Naive thymus-derived CD4-positive, alpha-beta T cell (primary cell): ENCODE measurements at regions of chr22 and their contacts with region 1.

Region 1: GRCh38 chr22:40636380-40637182 is at the start of gene MRTFA:
- DNase-seq: peak; percentile 90 to 99 (median 98)
- ATAC-seq: peak; percentile 96
- H3K4me3 ChIP-seq: peak within 1 kb of the TSS; percentile 84
- H3K4me3 Mint-ChIP-seq: peak within 1 kb of the TSS; percentile 94 to 100 (median 97)
- H3K27ac ChIP-seq: peak within 1 kb of the TSS; percentile 85
- H3K27ac Mint-ChIP-seq: peak within 1 kb of the TSS; percentile 96 to 99 (median 97)
- H3K4me1 ChIP-seq: peaks cover 14 to 27% of the 10 kb centered on the region in 2 donors
- H3K4me1 Mint-ChIP-seq: peaks cover 27 to 56% (median 44%) of the 10 kb centered on the region in 7 donors
- H3K27me3 ChIP-seq: no peaks in the 10 kb centered on the region
- H3K27me3 Mint-ChIP-seq: no peaks in the 10 kb centered on the region
- total RNA-seq, gene MRTFA: 64.0 to 114 (median 104) TPM

Region 2: DNA sequence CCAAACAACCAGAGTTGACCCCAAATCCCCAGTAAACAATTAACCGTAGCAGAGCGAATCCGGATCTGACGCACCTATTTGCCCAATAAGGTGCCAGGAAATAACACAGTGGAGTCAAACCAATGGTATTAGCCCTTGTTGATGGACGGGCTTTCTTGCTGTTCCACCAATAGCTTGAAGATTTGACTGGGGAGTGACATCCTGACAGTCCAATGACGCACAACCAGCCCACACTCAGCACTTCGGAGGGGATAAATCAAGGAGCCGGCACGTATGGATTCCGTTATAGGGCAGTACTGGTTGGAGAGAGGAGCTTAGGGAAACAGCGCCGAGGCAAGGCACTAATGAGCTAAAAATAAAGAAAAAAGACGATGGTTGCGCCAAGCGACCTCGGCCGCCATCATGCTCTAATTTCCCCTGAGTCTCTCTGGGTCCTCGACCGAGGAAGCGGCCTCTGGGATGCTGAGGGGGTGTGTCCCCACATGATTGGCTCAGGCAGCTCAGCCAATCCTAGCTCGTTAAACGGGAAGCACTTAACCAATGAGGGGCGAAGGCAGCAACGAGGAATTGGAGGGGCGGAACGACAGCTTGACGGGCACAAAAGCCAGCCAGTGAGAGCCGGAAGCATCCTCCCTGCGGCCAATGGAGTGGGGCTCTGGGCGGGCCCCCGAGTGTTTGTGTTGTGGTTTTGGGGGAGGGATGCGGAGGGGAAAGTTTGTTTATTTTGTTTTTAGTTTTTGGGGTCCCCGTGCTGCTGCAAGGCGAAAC is 592.3 kb before region 1 on chr22:
- CTCF ChIA-PET with region 1: no interaction called
- POLR2A ChIA-PET with region 1: interaction called, 7 read pairs
- intact Hi-C with region 1: loop called in 1 of 2 experiments (anchors 1 kb)
- DNase-seq: peak; percentile 87 to 100 (median 99)
- ATAC-seq: peak; percentile 92
- H3K4me3 ChIP-seq: peak overlapping the region; percentile 81
- H3K4me3 Mint-ChIP-seq: peak overlapping the region; percentile 94 to 99 (median 98)
- H3K27ac ChIP-seq: peak overlapping the region; percentile 88
- H3K27ac Mint-ChIP-seq: peak overlapping the region; percentile 98 to 100 (median 99)
- H3K4me1 ChIP-seq: peaks cover 15 to 29% of the 10 kb centered on the region in 2 donors
- H3K4me1 Mint-ChIP-seq: peaks cover 23 to 53% (median 40%) of the 10 kb centered on the region in 7 donors
- H3K27me3 ChIP-seq: no peaks in the 10 kb centered on the region
- H3K27me3 Mint-ChIP-seq: peaks cover 3 to 17% (median 7%) of the 10 kb centered on the region in 5 donors

Region 3: GRCh38 chr22:40376149-40376548 is 260.4 kb before region 1 on chr22:
- CTCF ChIA-PET with region 1: no interaction called
- POLR2A ChIA-PET with region 1: interaction called, 3 read pairs
- intact Hi-C with region 1: loop called (anchors 2 to 5 kb)
- DNase-seq: no peak
- ATAC-seq: no peak
- H3K4me3 ChIP-seq: no peak overlapping the region
- H3K4me3 Mint-ChIP-seq: peak overlapping the region in 2 of 10 donors; percentile 4 to 58
- H3K27ac ChIP-seq: no peak overlapping the region
- H3K27ac Mint-ChIP-seq: peak overlapping the region in 2 of 9 donors; percentile 32 to 59
- H3K4me1 ChIP-seq: peaks cover 2 to 18% of the 10 kb centered on the region in 2 donors
- H3K4me1 Mint-ChIP-seq: peaks cover 28 to 73% (median 49%) of the 10 kb centered on the region in 7 donors
- H3K27me3 ChIP-seq: no peaks in the 10 kb centered on the region
- H3K27me3 Mint-ChIP-seq: no peaks in the 10 kb centered on the region

Region 4: DNA sequence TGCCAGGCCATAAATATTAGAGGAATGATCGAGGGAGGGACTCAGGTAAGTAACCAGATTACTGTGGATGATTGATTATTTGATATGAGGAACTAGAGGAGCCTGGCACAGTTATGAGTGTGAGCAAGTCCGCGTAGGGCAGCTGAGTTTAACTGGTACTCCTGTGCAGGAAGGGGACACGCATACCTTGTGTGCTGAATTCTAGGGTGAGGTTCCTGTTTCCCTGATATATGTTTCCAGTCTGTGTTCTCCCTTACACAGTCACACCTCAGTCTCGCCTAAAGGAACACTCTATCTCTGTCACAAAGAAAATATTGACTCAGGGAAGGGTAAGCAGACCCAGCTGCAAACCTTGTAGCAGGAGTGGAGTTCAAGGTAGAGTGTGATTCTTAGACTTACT is 248.8 kb before region 1 on chr22:
- CTCF ChIA-PET with region 1: no interaction called
- POLR2A ChIA-PET with region 1: no interaction called
- intact Hi-C with region 1: no loop called
- DNase-seq: no peak
- ATAC-seq: no peak
- H3K4me3 ChIP-seq: no peak overlapping the region
- H3K4me3 Mint-ChIP-seq: peak overlapping the region in 7 of 10 donors; percentile 16 to 82 (median 44)
- H3K27ac ChIP-seq: no peak overlapping the region
- H3K27ac Mint-ChIP-seq: peak overlapping the region in 8 of 9 donors; percentile 46 to 88 (median 64)
- H3K4me1 ChIP-seq: peaks cover 10 to 54% of the 10 kb centered on the region in 2 donors
- H3K4me1 Mint-ChIP-seq: peaks cover 44 to 90% (median 84%) of the 10 kb centered on the region in 7 donors
- H3K27me3 ChIP-seq: no peaks in the 10 kb centered on the region
- H3K27me3 Mint-ChIP-seq: no peaks in the 10 kb centered on the region

Region 5: DNA sequence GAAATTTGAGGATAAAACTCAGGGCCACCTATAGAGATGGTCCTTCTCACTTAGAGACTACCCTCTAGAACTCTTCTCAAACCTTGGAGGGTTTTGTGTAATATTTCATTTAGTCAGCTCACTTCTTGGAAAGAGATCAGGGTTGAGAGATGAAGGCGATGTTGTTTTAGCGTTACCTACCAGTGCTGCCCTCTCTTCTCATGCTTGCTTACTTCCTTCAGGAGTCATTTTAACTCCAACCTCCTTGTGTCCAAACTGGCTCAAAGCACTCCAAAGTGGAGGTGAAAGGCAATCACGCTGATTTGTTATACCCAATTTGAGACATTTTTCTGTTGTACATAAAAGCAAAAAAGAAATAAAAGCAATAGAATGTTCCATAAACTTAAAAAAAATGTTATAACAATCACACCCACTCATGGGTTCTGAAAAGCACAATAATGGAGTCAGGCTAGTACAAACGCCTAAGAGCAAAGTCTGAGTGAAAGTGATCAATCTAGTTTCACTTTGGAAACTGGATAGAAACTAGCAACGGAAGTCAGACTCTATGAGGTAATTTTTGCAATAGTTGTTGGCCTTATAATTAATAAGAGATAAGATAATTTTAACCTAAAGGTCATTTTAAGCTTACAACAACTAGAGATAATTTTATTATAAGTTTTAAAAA is 117.2 kb before region 1 on chr22:
- CTCF ChIA-PET with region 1: interaction called, 10 read pairs
- POLR2A ChIA-PET with region 1: interaction called, 8 read pairs
- intact Hi-C with region 1: loop called (anchors 2 kb)
- DNase-seq: peak in 7 of 9 donors; percentile 36 to 58 (median 46)
- ATAC-seq: peak; percentile 88
- H3K4me3 ChIP-seq: peak overlapping the region; percentile 49
- H3K4me3 Mint-ChIP-seq: peak overlapping the region; percentile 67 to 88 (median 80)
- H3K27ac ChIP-seq: peak overlapping the region; percentile 61
- H3K27ac Mint-ChIP-seq: peak overlapping the region; percentile 84 to 98 (median 95)
- H3K4me1 ChIP-seq: peaks cover 10 to 15% of the 10 kb centered on the region in 2 donors
- H3K4me1 Mint-ChIP-seq: peaks cover 25 to 56% (median 42%) of the 10 kb centered on the region in 7 donors
- H3K27me3 ChIP-seq: no peaks in the 10 kb centered on the region
- H3K27me3 Mint-ChIP-seq: no peaks in the 10 kb centered on the region

Region 6: DNA sequence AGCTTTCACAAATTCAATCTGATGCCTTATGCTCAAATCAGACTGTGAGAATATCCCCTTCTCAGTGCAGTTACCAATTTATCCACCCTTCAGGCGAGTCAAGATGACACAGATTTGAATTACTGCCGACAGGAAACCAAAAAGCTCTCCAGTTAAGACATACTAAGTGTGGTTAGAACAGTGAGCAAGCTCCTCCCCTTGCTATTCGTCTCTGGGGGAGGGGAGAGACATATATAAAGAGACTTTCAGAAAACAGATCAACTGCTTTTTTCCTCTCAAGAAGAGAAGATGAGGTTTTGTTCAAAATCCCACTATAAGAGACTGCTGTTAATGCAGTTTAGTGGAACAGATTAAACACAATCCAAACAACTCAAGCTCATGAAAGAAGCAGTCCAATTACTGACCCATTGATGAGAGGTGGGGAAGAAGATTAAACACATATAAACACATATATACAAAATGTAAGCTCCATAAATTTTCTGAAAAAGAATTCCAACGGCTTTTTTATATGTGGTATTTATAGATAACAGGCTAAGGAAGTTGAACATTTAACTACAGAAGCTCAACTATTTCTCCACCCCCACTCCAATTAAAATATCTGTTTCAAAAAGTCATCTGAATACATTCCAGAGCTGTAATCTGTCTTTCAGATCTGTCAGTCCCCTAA is 102.7 kb before region 1 on chr22:
- CTCF ChIA-PET with region 1: interaction called, 5 read pairs
- POLR2A ChIA-PET with region 1: interaction called, 30 read pairs
- intact Hi-C with region 1: loop called (anchors 2 kb)
- DNase-seq: peak in 7 of 9 donors; percentile 71 to 85 (median 81)
- ATAC-seq: peak; percentile 99
- H3K4me3 ChIP-seq: peak overlapping the region; percentile 53
- H3K4me3 Mint-ChIP-seq: peak overlapping the region; percentile 78 to 96 (median 89)
- H3K27ac ChIP-seq: peak overlapping the region; percentile 64
- H3K27ac Mint-ChIP-seq: peak overlapping the region; percentile 84 to 96 (median 88)
- H3K4me1 ChIP-seq: peaks cover 28 to 36% of the 10 kb centered on the region in 2 donors
- H3K4me1 Mint-ChIP-seq: peaks cover 49 to 71% (median 64%) of the 10 kb centered on the region in 7 donors
- H3K27me3 ChIP-seq: no peaks in the 10 kb centered on the region
- H3K27me3 Mint-ChIP-seq: no peaks in the 10 kb centered on the region

Region 7: DNA sequence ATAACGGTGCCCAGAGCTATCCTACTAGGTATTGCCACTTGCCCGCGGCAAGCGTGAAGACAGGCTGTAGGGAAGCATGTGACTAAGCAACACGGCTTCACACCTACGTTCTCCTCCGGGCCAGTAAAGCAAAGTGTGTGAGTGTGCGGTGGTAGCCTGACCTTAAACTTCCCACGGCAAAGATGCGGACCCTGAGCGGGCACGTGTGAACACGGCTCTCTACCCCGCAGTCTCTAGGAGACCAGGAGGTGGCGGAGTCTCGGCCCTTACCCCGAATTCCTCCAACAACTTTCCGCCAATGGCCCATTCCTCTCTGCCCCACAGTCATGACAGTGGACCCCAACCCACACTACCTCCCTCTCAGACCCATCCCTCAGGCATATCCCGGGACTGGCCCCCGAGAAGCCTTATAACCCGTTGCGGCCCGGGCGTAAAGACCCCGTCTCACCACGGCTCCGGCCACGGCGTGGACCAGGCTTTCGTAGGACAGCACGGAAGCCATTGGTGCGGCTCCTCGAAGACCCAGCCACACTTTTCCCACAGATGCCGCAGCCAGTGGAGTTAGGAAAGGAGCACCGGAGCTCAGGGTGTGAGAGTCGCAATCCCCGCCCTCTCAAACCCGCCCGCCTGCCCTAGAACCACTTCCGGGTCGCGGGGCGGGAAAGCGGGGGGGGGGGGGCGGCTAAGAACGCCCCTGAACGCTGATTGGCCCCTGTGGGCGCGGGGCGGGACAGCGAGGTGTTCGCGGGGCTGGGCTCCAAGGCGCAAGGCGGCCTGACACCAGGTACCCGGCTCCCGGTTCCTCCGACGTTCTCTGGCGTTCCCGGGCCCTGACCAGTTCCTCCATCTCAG is 182.4 kb after region 1 on chr22 and contains the start of gene SLC25A17:
- CTCF ChIA-PET with region 1: interaction called, 4 read pairs
- POLR2A ChIA-PET with region 1: no interaction called
- intact Hi-C with region 1: loop called (anchors 1 kb)
- DNase-seq: peak; percentile 71 to 88 (median 82)
- ATAC-seq: peak; percentile 95
- H3K4me3 ChIP-seq: peak within 1 kb of the TSS; percentile 100
- H3K4me3 Mint-ChIP-seq: peak within 1 kb of the TSS; percentile 79 to 99 (median 93)
- H3K27ac ChIP-seq: peak within 1 kb of the TSS; percentile 86
- H3K27ac Mint-ChIP-seq: peak within 1 kb of the TSS; percentile 57 to 96 (median 88)
- H3K4me1 ChIP-seq: peaks cover 9 to 26% of the 10 kb centered on the region in 2 donors
- H3K4me1 Mint-ChIP-seq: peaks cover 22 to 42% (median 37%) of the 10 kb centered on the region in 7 donors
- H3K27me3 ChIP-seq: no peaks in the 10 kb centered on the region
- H3K27me3 Mint-ChIP-seq: no peaks in the 10 kb centered on the region
- total RNA-seq, gene SLC25A17: 6.8 to 22.1 (median 13.1) TPM

Region 8: DNA sequence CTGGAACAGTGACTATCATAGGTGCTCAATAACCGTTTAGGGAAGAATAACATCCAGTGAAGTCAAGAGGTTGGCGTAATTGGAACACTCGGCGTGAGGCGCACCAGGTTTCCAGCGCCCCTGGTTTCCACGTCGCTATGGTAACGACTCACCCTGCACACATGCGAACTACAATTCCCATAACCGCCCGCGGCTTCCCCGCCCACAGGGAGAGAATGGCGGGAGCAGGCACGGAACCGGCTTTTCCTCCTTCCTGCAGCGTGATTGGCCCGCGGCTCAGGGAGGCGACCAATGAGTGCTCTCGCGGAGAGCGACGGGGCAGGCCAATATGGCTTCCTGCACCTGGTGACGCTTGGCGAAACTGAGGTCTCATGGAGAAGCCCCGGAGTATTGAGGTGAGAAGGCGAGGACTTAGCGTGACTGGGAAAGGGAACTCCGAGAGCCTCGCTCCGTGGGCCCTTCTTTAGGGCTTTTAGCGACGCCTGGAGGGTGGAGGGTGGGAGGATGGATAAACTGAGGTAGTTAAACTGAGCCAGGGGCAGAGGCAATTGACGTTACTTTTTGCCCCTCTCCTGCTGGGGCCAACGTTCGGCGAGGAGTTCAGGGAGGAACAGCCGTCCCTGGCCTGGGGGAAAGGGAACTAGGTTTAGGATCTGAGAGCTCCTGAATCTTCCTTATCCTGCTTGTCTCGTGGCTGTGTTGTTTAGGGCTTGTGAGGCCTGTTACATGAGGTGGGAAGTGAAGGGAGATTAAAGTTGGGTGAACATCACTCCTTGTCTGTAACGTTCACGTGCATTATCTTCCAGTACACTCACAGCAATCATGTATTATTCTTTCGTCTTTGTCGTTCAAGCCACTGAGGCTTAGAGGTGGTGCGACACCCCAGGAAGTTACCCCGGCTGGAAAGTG is 568.7 kb after region 1 on chr22 and contains the start of gene L3MBTL2:
- CTCF ChIA-PET with region 1: no interaction called
- POLR2A ChIA-PET with region 1: no interaction called
- intact Hi-C with region 1: loop called in 1 of 2 experiments (anchors 10 kb)
- DNase-seq: peak; percentile 89 to 99 (median 97)
- ATAC-seq: peak; percentile 100
- H3K4me3 ChIP-seq: peak within 1 kb of the TSS; percentile 94
- H3K4me3 Mint-ChIP-seq: peak within 1 kb of the TSS; percentile 87 to 100 (median 96)
- H3K27ac ChIP-seq: peak within 1 kb of the TSS; percentile 85
- H3K27ac Mint-ChIP-seq: peak within 1 kb of the TSS; percentile 88 to 98 (median 92)
- H3K4me1 ChIP-seq: peaks cover 4 to 10% of the 10 kb centered on the region in 2 donors
- H3K4me1 Mint-ChIP-seq: peaks cover 10 to 40% (median 36%) of the 10 kb centered on the region in 7 donors
- H3K27me3 ChIP-seq: no peaks in the 10 kb centered on the region
- H3K27me3 Mint-ChIP-seq: peaks cover 0 to 26% (median 0%) of the 10 kb centered on the region in 5 donors
- total RNA-seq, gene L3MBTL2: 31.6 to 45.9 (median 43.3) TPM